ENCODE measurements at regions of chr9 and their contacts with region 1.

Region 1: GRCh38 chr9:101311758-101312420 is 72.9 kb downstream of the BAAT start:
- DNase-seq: no peak
- ATAC-seq: peak; percentile 61
- H3K4me3 Mint-ChIP-seq: no peak overlapping the region
- H3K27ac Mint-ChIP-seq: no peak overlapping the region
- H3K4me1 Mint-ChIP-seq: no peaks in the 10 kb centered on the region
- H3K27me3 Mint-ChIP-seq: peaks cover 6% of the 10 kb centered on the region

Region 2: GRCh38 chr9:100505564-100506159 is 806.2 kb before region 1 on chr9:
- CTCF ChIA-PET with region 1: no interaction called
- POLR2A ChIA-PET with region 1: no interaction called
- intact Hi-C with region 1: loop called in 1 of 2 experiments (anchors 10 kb)
- DNase-seq: peak; percentile 87
- ATAC-seq: peak; percentile 33
- H3K4me3 Mint-ChIP-seq: no peak overlapping the region
- H3K27ac Mint-ChIP-seq: no peak overlapping the region
- H3K4me1 Mint-ChIP-seq: no peaks in the 10 kb centered on the region
- H3K27me3 Mint-ChIP-seq: peaks cover 2% of the 10 kb centered on the region

Region 3: DNA sequence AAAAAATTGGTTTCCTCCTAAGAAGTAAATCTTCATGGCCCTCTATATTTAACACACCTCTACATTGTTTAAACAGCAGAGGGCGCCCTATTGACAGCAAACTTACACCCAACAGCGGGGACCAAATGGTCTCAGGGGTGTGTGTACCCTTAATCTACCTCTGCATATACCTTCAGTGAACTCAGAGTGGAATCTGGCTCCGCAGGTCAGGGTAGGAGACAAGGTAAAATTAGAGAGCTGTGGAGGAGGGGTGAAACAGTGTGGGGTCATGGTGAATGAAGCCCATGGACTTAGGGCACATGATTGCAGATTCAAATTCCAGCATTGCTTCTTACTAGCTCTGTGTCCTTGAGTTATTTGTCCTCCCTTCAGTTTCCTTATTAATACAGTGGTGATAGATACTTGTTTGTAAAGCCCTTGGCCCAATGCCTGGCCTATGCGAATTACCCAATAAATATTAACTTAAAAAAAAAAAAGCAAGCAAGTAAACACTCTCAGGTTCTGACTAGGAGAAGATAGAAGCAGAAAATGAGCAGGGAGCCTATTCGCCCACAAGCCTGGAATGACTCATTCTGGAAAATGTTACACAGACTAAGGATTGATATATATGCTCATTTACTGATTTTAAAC is 611.1 kb before region 1 on chr9:
- CTCF ChIA-PET with region 1: interaction called, 6 read pairs
- POLR2A ChIA-PET with region 1: no interaction called
- intact Hi-C with region 1: loop called in 1 of 2 experiments (anchors 5 kb)
- DNase-seq: peak; percentile 20
- ATAC-seq: no peak
- H3K4me3 Mint-ChIP-seq: no peak overlapping the region
- H3K27ac Mint-ChIP-seq: no peak overlapping the region
- H3K4me1 Mint-ChIP-seq: no peaks in the 10 kb centered on the region
- H3K27me3 Mint-ChIP-seq: no peaks in the 10 kb centered on the region

Region 4: DNA sequence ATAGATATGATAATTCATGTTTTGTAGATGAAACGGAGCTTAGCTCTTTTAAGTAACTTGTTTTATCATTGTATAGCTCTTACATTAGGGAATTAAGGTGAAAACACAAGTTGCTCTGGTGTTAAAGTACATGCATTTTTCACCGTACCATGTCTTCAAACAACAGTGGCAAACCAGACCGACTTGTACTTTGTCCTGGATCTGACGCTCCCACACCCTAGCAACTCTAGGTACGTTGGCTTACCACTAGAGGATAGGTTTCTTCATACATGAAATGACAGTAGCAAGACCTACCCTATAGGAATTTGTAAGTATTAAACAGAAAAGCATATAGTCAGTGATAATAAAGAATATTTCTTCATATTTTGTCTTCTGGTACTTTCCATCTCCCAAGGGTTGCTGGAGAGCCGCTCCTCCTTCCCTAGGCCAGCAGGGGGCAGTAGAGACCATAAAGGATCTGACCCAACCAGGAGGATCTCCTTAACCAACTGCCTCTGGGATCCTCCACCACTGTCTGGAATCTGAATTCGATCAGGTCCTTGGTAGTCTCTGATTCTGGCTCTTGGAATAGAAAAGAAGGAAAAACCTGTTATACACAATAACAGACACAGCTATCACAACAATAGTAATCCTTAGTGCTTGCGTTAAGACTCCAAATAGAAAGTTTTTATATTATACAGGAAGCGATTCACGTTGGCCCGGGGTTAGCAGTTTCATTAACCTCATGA is 597.4 kb before region 1 on chr9:
- CTCF ChIA-PET with region 1: interaction called, 17 read pairs
- POLR2A ChIA-PET with region 1: no interaction called
- intact Hi-C with region 1: loop called in 1 of 2 experiments (anchors 1 kb)
- DNase-seq: peak; percentile 77
- ATAC-seq: peak; percentile 53
- H3K4me3 Mint-ChIP-seq: no peak overlapping the region
- H3K27ac Mint-ChIP-seq: no peak overlapping the region
- H3K4me1 Mint-ChIP-seq: no peaks in the 10 kb centered on the region
- H3K27me3 Mint-ChIP-seq: peaks cover 5% of the 10 kb centered on the region

Region 5: GRCh38 chr9:101119206-101119819 is 192.6 kb before region 1 on chr9:
- CTCF ChIA-PET with region 1: interaction called, 9 read pairs
- POLR2A ChIA-PET with region 1: no interaction called
- intact Hi-C with region 1: loop called (anchors 1 kb)
- DNase-seq: peak; percentile 57
- ATAC-seq: no peak
- H3K4me3 Mint-ChIP-seq: no peak overlapping the region
- H3K27ac Mint-ChIP-seq: no peak overlapping the region
- H3K4me1 Mint-ChIP-seq: no peaks in the 10 kb centered on the region
- H3K27me3 Mint-ChIP-seq: no peaks in the 10 kb centered on the region

Region 6: GRCh38 chr9:101176384-101176783 is 135.5 kb before region 1 on chr9:
- CTCF ChIA-PET with region 1: no interaction called
- POLR2A ChIA-PET with region 1: no interaction called
- intact Hi-C with region 1: loop called in 1 of 2 experiments (anchors 5 kb)
- DNase-seq: no peak
- ATAC-seq: no peak
- H3K4me3 Mint-ChIP-seq: no peak overlapping the region
- H3K27ac Mint-ChIP-seq: no peak overlapping the region
- H3K4me1 Mint-ChIP-seq: no peaks in the 10 kb centered on the region
- H3K27me3 Mint-ChIP-seq: peaks cover 8% of the 10 kb centered on the region

Region 7: GRCh38 chr9:101325053-101325452 is 13.2 kb after region 1 on chr9:
- CTCF ChIA-PET with region 1: interaction called, 10 read pairs
- POLR2A ChIA-PET with region 1: no interaction called
- intact Hi-C with region 1: no loop called
- DNase-seq: no peak
- ATAC-seq: no peak
- H3K4me3 Mint-ChIP-seq: no peak overlapping the region
- H3K27ac Mint-ChIP-seq: no peak overlapping the region
- H3K4me1 Mint-ChIP-seq: no peaks in the 10 kb centered on the region
- H3K27me3 Mint-ChIP-seq: peaks cover 12% of the 10 kb centered on the region

Region 8: DNA sequence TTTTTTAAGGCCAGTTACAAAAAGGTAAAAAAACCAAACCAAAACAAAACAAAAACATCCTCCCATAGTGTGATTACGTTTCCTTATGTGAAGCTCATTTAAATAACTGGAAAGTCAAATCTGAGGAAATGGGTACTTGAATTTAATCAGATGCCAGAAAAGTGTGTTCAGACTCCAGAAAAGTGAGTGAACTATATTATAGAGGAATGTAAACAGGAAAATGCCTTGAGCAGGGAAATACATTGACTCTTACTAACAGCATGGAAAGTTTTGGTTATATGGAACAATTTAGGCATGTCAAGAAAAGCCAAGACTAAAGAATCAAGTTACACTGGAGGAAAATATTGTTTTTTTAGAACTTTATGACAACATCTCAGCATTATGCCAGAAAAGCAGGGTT is 183.9 kb after region 1 on chr9:
- CTCF ChIA-PET with region 1: no interaction called
- POLR2A ChIA-PET with region 1: no interaction called
- intact Hi-C with region 1: no loop called
- DNase-seq: no peak
- ATAC-seq: no peak
- H3K4me3 Mint-ChIP-seq: no peak overlapping the region
- H3K27ac Mint-ChIP-seq: no peak overlapping the region
- H3K4me1 Mint-ChIP-seq: no peaks in the 10 kb centered on the region
- H3K27me3 Mint-ChIP-seq: peaks cover 24% of the 10 kb centered on the region

Measured in activated CD4-positive, alpha-beta T cell treated with anti-CD3 and anti-CD28 coated beads for 36 hours (primary cell).